ENCODE measurements at regions of chr7 and their contacts with region 1.

Region 1: DNA sequence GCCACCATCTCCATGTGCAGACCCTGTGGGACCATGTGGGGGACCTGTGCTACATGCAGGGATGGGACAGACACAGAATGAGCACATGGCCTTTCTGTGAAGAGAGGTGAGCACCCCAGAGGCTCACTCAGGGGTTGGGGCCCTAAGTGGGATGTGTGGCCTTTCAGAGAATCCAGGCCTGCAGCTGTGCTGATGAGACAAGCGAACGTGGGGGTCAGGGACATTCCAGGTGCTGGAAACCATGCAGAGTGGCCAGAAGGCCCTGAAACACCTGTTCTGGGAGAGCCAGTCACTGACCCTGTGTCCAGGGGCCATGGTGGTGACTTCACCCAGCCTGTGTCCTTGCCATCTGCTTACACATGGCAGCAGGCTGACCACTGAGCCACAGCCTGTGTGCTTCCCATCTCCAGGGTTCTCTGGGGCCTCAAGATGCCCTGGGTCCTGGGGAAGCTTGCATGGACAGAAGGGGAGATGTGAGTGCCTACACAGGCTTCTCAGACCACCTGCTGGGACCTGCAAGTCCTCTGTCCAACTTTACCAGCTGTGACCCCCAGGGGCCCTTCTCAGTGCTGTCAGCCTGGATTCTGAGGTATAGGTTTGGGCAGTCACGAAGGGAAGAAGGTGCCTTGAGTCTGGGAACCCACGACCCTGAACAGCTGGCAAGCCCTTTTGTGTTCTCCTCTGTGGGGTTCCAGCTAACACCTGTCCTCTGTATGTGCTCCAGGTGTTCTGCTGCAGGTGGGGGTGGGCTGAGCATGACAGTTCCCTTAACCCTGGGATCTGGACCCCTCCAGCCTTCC is 17.6 kb downstream of the RAMP3 start:
- DNase-seq: peak in 1 of 2 donors; percentile 59
- H3K4me3 ChIP-seq: no peak overlapping the region
- H3K27ac ChIP-seq: no peak overlapping the region
- H3K4me1 ChIP-seq: no peaks in the 10 kb centered on the region
- H3K27me3 ChIP-seq: peaks cover 0 to 22% of the 10 kb centered on the region in 2 donors
- CTCF ChIP-seq: no peak

Region 2: GRCh38 chr7:45599851-45600706 is 424.9 kb after region 1 on chr7:
- intact Hi-C with region 1: loop called (anchors 5 kb)
- DNase-seq: no peak
- H3K4me3 ChIP-seq: no peak overlapping the region
- H3K27ac ChIP-seq: no peak overlapping the region
- H3K4me1 ChIP-seq: peaks cover 0 to 4% (median 0%) of the 10 kb centered on the region in 4 donors
- H3K27me3 ChIP-seq: no peaks in the 10 kb centered on the region
- CTCF ChIP-seq: no peak

Measured in tibial artery (tissue), 4 donors.